ENCODE measurements at regions of chr10 and their contacts with region 1.

Region 1: DNA sequence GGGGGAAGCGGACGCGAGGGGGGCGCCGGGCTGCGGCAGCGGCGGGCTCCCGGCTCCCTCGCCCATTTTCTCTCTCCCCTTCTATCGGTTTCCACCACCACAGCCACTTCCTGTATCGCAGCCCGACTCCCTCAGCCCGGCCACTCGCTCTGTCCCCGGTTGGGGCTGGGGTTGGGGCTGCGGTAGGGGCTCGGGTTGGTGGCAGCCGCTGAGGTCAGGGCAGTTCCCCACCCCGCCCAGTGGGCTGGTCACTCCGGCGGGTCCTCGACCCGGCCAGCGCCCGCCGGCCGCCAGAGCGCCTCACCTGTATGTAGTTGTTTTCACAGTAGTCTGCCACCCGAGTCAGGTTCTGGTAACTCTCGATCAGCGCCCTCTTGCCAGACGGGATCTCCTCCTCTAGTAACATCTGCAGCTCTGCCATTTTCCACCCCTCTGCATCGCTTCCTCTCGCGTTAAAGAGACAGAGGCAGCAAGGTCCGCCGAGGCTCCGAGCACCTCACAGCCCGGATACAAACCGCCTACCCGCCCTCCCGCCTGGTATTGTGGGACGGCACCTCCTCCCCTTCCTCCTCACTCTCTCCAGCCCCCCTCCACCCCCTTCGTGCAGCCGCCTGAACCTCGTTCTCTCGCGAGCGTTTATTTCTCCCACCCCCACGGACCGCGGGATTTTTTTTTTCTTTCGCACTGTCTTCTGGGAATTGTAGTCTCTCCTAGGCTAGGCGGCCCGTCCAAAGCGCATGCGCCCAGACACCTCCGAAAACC is at the start of gene ABI1:
- DNase-seq: peak; percentile 97
- H3K4me3 Mint-ChIP-seq: peak within 1 kb of the TSS; percentile 97
- H3K27ac Mint-ChIP-seq: peak within 1 kb of the TSS; percentile 100
- H3K4me1 Mint-ChIP-seq: peaks cover 39% of the 10 kb centered on the region
- H3K27me3 Mint-ChIP-seq: peaks cover 15% of the 10 kb centered on the region
- total RNA-seq, gene ABI1: 66.6 and 68.0 TPM in 2 replicates

Region 2: GRCh38 chr10:26486991-26487850 is 373.4 kb before region 1 on chr10:
- intact Hi-C with region 1: loop called (anchors 2 kb)
- DNase-seq: peak; percentile 65
- H3K4me3 Mint-ChIP-seq: peak overlapping the region; percentile 73
- H3K27ac Mint-ChIP-seq: peak overlapping the region; percentile 97
- H3K4me1 Mint-ChIP-seq: peaks cover 61% of the 10 kb centered on the region
- H3K27me3 Mint-ChIP-seq: no peaks in the 10 kb centered on the region

Region 3: DNA sequence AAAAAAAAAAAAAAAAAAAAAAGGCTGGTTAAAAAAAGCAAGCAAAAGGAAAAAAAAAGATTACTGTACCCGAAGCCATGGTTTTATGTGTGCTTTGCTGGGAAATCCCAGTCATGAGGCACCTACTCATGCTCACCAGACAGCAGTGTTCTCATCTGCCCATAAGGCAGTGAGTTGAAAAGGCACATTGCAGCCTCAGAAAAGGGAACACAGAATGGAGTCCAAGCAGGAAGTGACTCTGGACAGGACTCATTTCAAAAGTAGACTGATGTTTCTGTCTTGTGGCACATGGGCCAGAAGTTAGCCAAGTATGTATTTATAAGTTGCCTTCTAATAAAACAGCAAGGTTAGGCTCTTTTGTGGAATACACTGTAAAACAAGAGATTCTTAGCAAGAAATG is 122.9 kb before region 1 on chr10:
- intact Hi-C with region 1: loop called (anchors 1 kb)
- DNase-seq: peak; percentile 59
- H3K4me3 Mint-ChIP-seq: peak overlapping the region; percentile 45
- H3K27ac Mint-ChIP-seq: peak overlapping the region; percentile 99
- H3K4me1 Mint-ChIP-seq: peaks cover 74% of the 10 kb centered on the region
- H3K27me3 Mint-ChIP-seq: no peaks in the 10 kb centered on the region

Region 4: GRCh38 chr10:26839966-26840627 is 20.5 kb before region 1 on chr10:
- intact Hi-C with region 1: loop called (anchors 2 kb)
- DNase-seq: no peak
- H3K4me3 Mint-ChIP-seq: no peak overlapping the region
- H3K27ac Mint-ChIP-seq: peak overlapping the region; percentile 63
- H3K4me1 Mint-ChIP-seq: peaks cover 55% of the 10 kb centered on the region
- H3K27me3 Mint-ChIP-seq: no peaks in the 10 kb centered on the region

Region 5: DNA sequence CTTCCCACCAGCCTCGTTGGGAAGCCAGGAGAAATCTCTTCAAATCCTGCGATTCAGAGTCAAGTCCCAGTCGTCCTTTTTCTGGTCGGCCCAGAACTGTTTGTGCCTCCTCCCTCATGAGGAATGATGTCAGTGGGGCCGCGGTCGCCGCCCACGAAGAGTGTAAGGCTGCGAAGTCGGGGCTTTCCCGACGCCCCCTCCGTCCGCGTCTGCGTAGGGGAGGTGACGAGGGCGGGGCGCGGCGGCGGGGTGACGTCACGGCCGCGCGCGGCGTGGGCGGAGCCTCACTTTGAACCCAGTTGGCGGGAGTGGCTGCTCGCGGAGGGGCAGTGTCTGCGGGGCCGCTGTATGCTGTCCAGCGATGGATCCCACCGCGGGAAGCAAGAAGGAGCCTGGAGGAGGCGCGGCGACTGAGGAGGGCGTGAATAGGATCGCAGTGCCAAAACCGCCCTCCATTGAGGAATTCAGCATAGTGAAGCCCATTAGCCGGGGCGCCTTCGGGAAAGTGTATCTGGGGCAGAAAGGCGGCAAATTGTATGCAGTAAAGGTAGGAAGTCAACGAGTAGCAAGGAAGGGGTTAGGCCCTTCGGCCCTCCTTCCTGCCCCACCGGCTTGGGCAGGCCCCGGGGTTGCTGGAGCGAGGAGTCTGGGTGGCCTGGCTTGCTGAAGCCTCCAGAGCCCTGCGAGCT is 294.6 kb after region 1 on chr10 and contains the start of gene MASTL:
- intact Hi-C with region 1: loop called (anchors 1 kb)
- DNase-seq: peak; percentile 93
- H3K4me3 Mint-ChIP-seq: peak within 1 kb of the TSS; percentile 99
- H3K27ac Mint-ChIP-seq: peak within 1 kb of the TSS; percentile 99
- H3K4me1 Mint-ChIP-seq: peaks cover 42% of the 10 kb centered on the region
- H3K27me3 Mint-ChIP-seq: no peaks in the 10 kb centered on the region
- total RNA-seq, gene MASTL: 33.2 and 33.7 TPM in 2 replicates

Region 6: DNA sequence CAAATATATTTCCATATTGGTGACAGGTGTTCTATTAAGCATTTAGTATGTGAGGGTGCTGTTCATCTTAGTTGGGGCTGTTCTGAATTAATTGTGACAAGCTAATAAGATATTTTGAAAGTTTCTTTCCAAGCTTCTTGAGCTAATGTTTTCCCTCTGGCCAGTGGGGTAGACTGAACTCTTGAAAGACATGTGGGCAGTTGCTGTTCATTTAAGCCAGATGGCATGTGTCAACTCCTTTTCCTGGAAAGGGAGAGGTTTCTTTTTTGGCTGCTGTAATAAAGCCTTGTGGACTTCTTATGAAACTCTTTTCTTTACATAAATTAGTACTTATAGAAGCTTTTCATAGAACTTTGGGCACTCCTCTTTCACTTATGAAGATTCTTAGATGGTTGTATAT is 665.2 kb after region 1 on chr10:
- intact Hi-C with region 1: loop called (anchors 5 kb)
- DNase-seq: no peak
- H3K4me3 Mint-ChIP-seq: no peak overlapping the region
- H3K27ac Mint-ChIP-seq: no peak overlapping the region
- H3K4me1 Mint-ChIP-seq: peaks cover 81% of the 10 kb centered on the region
- H3K27me3 Mint-ChIP-seq: no peaks in the 10 kb centered on the region